ENCODE measurements at regions of chr1 and their contacts with region 1.

Region 1: GRCh38 chr1:145957443-145958319 is at the start of gene LIX1L:
- DNase-seq: peak; percentile 98
- H3K4me3 Mint-ChIP-seq: peak within 1 kb of the TSS; percentile 87
- H3K27ac Mint-ChIP-seq: peak within 1 kb of the TSS; percentile 92
- H3K4me1 Mint-ChIP-seq: peaks cover 52% of the 10 kb centered on the region
- H3K27me3 Mint-ChIP-seq: no peaks in the 10 kb centered on the region
- total RNA-seq, gene LIX1L: 37.8 and 38.4 TPM in 2 replicates

Region 2: GRCh38 chr1:145871994-145872924 is 85.4 kb before region 1 on chr1:
- intact Hi-C with region 1: loop called (anchors 5 kb)
- DNase-seq: peak; percentile 83
- H3K4me3 Mint-ChIP-seq: peak overlapping the region; percentile 87
- H3K27ac Mint-ChIP-seq: peak overlapping the region; percentile 80
- H3K4me1 Mint-ChIP-seq: peaks cover 14% of the 10 kb centered on the region
- H3K27me3 Mint-ChIP-seq: peaks cover 41% of the 10 kb centered on the region

Region 3: GRCh38 chr1:145927063-145927886 is 30.4 kb before region 1 on chr1 and contains the start of gene RBM8A:
- intact Hi-C with region 1: loop called (anchors 1 kb)
- DNase-seq: peak; percentile 98
- H3K4me3 Mint-ChIP-seq: no peak within 1 kb of the TSS
- H3K27ac Mint-ChIP-seq: peak within 1 kb of the TSS; percentile 86
- H3K4me1 Mint-ChIP-seq: peaks cover 15% of the 10 kb centered on the region
- H3K27me3 Mint-ChIP-seq: no peaks in the 10 kb centered on the region
- total RNA-seq, gene RBM8A: 326 and 355 TPM in 2 replicates

Region 4: DNA sequence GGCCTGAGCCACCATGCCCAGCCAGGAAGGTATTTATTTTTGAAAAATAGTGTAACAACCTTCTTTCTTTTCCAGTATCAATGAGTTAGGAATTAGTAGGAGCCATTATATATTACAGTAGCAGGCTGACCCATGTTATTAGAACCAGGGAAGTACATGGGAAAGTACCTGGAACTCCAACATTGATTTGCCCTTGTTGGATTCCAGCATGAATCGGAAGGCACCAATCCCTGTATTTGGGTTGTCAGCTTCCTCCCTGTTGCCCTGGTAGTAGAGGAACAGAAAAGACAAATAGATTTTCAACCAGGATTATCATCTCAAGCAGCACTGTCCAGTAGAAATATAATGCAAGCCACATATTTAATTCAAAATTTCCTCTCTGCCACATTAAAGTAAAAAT is 20.2 kb before region 1 on chr1:
- intact Hi-C with region 1: no loop called
- DNase-seq: no peak
- H3K4me3 Mint-ChIP-seq: no peak overlapping the region
- H3K27ac Mint-ChIP-seq: no peak overlapping the region
- H3K4me1 Mint-ChIP-seq: peaks cover 14% of the 10 kb centered on the region
- H3K27me3 Mint-ChIP-seq: no peaks in the 10 kb centered on the region

Region 5: DNA sequence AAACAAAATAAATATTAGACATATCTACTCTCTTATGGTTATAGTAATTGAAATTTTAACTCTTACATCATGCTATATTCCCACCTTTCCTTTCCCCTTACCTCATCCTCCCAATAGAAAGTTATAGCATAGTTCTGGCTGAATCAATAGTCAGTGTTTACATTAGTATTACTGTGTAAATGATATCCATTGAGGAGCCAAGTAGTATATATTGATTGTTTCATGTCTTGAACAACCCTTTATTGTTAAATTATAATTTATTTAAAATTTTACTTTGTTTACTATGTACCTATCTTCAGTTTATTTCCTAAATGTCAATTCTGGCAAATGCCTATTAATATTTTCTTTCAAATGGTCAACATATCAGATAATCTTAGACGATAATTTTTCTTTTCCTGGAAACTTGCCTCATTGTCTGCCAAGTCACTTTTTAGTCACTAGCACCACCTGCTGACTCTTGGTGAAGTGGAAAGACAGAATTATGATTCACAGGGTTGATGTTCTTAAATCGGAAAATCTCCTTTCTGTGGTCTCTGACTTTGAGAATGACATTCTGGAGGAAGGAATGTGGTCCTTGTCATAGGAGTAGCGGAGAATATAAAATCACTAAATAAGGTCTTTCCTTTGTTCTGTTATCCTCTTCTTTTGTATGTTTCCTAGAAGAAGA is 55.2 kb after region 1 on chr1:
- intact Hi-C with region 1: no loop called
- DNase-seq: peak; percentile 90
- H3K4me3 Mint-ChIP-seq: no peak overlapping the region
- H3K27ac Mint-ChIP-seq: peak overlapping the region; percentile 28
- H3K4me1 Mint-ChIP-seq: peaks cover 12% of the 10 kb centered on the region
- H3K27me3 Mint-ChIP-seq: peaks cover 26% of the 10 kb centered on the region

Region 6: DNA sequence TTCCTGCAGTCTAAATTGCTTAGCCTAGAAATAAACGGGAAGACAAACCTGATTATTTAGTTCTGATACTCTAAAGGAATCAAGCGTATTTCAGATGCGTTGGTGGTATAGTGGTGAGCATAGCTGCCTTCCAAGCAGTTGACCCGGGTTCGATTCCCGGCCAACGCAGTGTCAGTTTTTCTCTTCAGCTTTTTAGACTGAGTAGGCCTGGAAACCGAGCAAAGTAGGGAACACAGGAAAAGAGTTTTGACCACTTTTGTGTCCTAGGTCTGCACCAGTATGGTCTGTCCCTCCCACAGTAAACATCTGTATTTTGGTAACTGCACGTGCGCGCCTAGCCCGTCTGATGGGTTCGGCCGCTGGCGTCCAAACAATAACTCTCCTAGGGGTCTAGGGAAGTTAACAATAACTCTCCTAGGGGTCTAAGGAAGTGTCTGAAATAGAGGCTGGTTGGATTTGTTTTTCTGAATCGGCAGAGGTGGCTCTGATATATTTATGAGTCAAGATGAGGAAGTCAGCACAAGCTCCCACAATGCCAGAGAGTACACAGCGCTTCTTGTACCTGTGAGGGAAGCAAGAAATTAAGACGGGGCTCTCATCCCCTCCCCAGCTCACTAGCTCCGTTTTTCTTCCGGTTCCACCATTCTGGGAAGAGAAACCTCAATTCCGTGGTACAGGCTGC is 79.4 kb after region 1 on chr1:
- intact Hi-C with region 1: loop called (anchors 1 kb)
- DNase-seq: peak; percentile 93
- H3K4me3 Mint-ChIP-seq: peak overlapping the region; percentile 96
- H3K27ac Mint-ChIP-seq: peak overlapping the region; percentile 97
- H3K4me1 Mint-ChIP-seq: peaks cover 46% of the 10 kb centered on the region
- H3K27me3 Mint-ChIP-seq: peaks cover 16% of the 10 kb centered on the region